Activated naive CD4-positive, alpha-beta T cell treated with anti-CD3 and anti-CD28 coated beads for 36 hours (primary cell): ENCODE measurements at regions of chr5 and their contacts with region 1.

Region 1: DNA sequence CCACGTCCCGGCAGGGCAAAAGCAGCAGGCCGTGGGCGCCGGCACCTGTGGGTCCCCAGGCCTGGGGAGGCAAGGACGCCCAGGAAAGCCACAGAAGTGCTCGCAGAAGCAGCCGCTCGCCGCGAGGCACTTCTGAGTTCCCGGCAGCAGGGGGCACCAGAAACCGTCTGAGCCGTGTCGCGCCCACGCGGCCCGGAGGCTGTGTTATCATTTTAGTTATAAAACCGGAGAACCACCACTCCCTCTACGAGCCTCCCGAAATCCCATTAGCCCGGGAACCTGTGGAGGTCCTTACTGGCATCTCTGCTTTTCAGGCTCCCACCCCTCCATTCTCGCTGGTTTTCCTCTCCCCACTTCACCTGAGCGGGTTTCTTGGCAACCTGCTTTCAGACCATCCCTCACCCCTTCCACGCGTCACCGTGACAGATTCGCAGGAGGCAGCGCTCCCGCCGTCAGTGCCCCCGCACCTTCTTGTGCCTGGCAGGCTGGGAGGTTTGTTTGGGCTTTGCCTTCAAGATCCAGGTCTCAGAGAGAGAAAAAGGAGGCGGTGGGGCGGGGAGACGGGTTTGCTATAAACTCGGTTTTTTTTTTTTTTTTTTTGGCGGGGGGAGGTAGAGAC is 2.3 kb downstream of the GDNF start:
- DNase-seq: peak; percentile 85
- H3K4me3 Mint-ChIP-seq: peak overlapping the region; percentile 49
- H3K27ac Mint-ChIP-seq: no peak overlapping the region
- H3K4me1 Mint-ChIP-seq: peaks cover 33% of the 10 kb centered on the region
- H3K27me3 Mint-ChIP-seq: peaks cover 81% of the 10 kb centered on the region

Region 2: GRCh38 chr5:37533851-37534250 is 303.7 kb before region 1 on chr5:
- CTCF ChIA-PET with region 1: no interaction called
- intact Hi-C with region 1: no loop called
- DNase-seq: no peak
- H3K4me3 Mint-ChIP-seq: no peak overlapping the region
- H3K27ac Mint-ChIP-seq: no peak overlapping the region
- H3K4me1 Mint-ChIP-seq: no peaks in the 10 kb centered on the region
- H3K27me3 Mint-ChIP-seq: no peaks in the 10 kb centered on the region

Region 3: GRCh38 chr5:38193015-38193581 is 355.6 kb after region 1 on chr5:
- CTCF ChIA-PET with region 1: interaction called, 16 read pairs
- intact Hi-C with region 1: loop called (anchors 1 kb)
- DNase-seq: peak; percentile 78
- H3K4me3 Mint-ChIP-seq: no peak overlapping the region
- H3K27ac Mint-ChIP-seq: no peak overlapping the region
- H3K4me1 Mint-ChIP-seq: peaks cover 4% of the 10 kb centered on the region
- H3K27me3 Mint-ChIP-seq: peaks cover 22% of the 10 kb centered on the region